Activated naive CD8-positive, alpha-beta T cell treated with anti-CD3 and anti-CD28 coated beads, Interleukin-2, amount 10 ng/mL, durations not matched to agents 7 days and 5 days (primary cell): ENCODE measurements at regions of chr7 and their contacts with region 1.

Region 1: DNA sequence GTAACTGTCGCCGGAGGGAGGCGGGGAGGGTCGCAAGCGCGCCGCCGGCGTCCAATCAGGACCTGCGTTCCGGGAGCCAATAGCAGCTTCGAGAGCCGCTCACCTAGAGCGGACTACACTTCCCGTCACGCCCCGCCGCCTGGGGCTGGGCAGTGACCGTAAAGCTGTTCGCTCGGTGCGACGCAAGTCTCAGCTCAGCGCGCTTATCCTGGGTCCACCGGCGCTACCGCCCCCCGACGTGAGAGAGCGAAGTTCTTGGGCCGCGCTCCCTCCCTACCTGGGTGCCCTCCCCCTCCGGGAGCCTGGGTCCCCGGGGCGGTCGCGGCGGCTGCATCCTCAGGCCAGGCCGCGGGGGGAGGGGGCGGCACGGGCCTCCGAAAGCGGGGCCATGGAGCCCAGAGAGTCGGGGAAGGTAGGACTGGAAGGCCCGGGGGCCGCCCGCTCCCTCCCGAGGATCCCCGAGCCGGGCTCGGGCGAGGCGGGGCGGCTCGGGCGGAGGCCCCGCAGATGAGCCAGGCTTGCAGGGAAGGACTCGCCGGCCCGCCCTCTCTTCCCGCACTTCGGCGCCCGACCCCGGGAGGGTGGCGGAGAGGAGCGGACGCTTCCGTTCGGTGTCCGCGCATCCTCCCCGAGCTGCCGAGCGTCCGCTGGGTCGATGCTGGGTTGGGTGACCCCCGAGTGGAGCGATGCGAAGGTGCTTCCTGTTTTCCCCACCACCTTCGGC is at the start of gene ZNF862:
- DNase-seq: peak; percentile 93
- ATAC-seq: peak; percentile 97
- H3K4me3 Mint-ChIP-seq: peak within 1 kb of the TSS; percentile 88
- H3K27ac Mint-ChIP-seq: peak within 1 kb of the TSS; percentile 80
- H3K4me1 Mint-ChIP-seq: peaks cover 22% of the 10 kb centered on the region
- H3K27me3 Mint-ChIP-seq: peaks cover 10% of the 10 kb centered on the region
- total RNA-seq, gene ZNF862: 44.1 to 45.6 TPM

Region 2: GRCh38 chr7:149850007-149850594 is 11.7 kb after region 1 on chr7:
- POLR2A ChIA-PET with region 1: interaction called, 23 read pairs
- DNase-seq: no peak
- ATAC-seq: no peak
- H3K4me3 Mint-ChIP-seq: no peak overlapping the region
- H3K27ac Mint-ChIP-seq: no peak overlapping the region
- H3K4me1 Mint-ChIP-seq: peaks cover 14% of the 10 kb centered on the region
- H3K27me3 Mint-ChIP-seq: no peaks in the 10 kb centered on the region

Region 3: DNA sequence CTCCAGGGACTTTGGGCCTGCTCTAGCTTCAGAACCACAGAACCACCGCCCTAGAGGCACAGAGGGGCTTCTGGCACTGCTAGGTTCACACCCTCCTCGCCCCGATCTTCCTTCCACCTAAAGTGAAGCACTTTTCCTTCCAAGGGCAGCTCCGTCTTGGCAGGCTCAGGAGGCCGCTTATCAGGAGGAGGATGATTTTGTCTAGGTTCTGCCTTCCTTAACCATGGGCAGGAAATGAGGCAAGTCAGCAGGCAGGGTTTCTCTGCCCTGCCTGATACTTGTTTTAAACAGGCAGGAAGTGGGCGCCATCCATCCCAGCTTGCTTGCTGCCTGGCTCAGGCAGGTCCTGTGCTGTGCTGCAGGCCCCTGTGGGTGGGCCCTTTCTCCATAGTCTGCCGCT is 27.1 kb after region 1 on chr7:
- POLR2A ChIA-PET with region 1: interaction called, 42 read pairs
- DNase-seq: peak; percentile 64
- ATAC-seq: peak; percentile 73
- H3K4me3 Mint-ChIP-seq: peak overlapping the region; percentile 76
- H3K27ac Mint-ChIP-seq: peak overlapping the region; percentile 96
- H3K4me1 Mint-ChIP-seq: peaks cover 74% of the 10 kb centered on the region
- H3K27me3 Mint-ChIP-seq: no peaks in the 10 kb centered on the region